PC-3 (cell line): ENCODE measurements at regions of chr13 and their contacts with region 1.

Region 1: GRCh38 chr13:97018029-97018831 is 24.0 kb upstream of the OXGR1 start:
- DNase-seq: peak; percentile 72
- ATAC-seq: peak; percentile 69
- H3K4me3 ChIP-seq: no peak overlapping the region
- H3K27ac ChIP-seq: no peak overlapping the region
- H3K4me1 ChIP-seq: no peaks in the 10 kb centered on the region
- H3K27me3 ChIP-seq: peaks cover 42% of the 10 kb centered on the region
- CTCF ChIP-seq: peak; percentile 84

Region 2: GRCh38 chr13:96967248-96967745 is 50.9 kb before region 1 on chr13:
- CTCF ChIA-PET with region 1: interaction called, 10 read pairs
- POLR2A ChIA-PET with region 1: no interaction called
- intact Hi-C with region 1: no loop called
- DNase-seq: peak; percentile 26
- ATAC-seq: no peak
- H3K4me3 ChIP-seq: no peak overlapping the region
- H3K27ac ChIP-seq: no peak overlapping the region
- H3K4me1 ChIP-seq: no peaks in the 10 kb centered on the region
- H3K27me3 ChIP-seq: 0 out of 2 replicates have a peak, but pooled peaks cover 4% of the 10 kb centered on the region
- CTCF ChIP-seq: no peak; the same call in 1 of the 2 replicates

Region 3: DNA sequence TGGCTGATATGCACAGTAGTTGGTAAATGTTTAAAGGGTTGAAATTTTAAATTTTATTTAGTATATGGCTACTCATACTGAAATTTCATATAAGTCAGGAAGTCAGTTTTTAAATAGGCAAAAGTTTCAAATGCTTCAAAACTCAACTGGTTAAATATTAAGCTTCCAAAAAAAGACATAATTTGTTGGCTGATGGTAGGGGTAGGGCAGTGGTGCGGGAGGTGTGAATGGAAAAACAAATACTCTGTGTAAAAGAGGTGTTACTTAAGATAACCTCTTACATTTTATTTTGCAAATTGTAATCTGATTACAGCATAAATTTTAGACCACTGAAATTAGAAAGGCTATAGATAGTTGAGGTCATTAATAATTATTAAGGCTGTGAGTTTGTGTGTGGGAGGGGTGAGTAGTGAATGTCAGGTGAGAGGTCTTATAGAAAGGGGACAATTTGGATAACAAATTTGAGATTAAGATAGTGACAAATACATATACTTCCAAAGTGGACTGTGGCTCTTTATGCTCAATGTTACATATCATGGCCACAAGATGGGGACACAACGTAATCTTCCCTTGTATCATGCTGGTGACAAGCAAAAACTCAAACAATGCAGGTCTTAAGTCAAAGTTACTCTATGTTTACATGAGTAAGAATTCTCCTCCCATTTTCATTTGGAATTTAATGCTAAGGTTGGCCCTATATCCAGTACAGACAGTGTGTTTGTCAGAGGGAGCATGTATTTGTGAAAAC is 12.6 kb after region 1 on chr13:
- CTCF ChIA-PET with region 1: no interaction called
- POLR2A ChIA-PET with region 1: no interaction called
- intact Hi-C with region 1: loop called (anchors 1 kb)
- DNase-seq: peak; percentile 60
- ATAC-seq: peak; percentile 68
- H3K4me3 ChIP-seq: no peak overlapping the region
- H3K27ac ChIP-seq: no peak overlapping the region
- H3K4me1 ChIP-seq: no peaks in the 10 kb centered on the region; the same call in 1 of the 2 replicates
- H3K27me3 ChIP-seq: no peaks in the 10 kb centered on the region
- CTCF ChIP-seq: peak; percentile 58

Region 4: GRCh38 chr13:97043302-97043701 is 25.1 kb after region 1 on chr13:
- CTCF ChIA-PET with region 1: no interaction called
- POLR2A ChIA-PET with region 1: no interaction called
- intact Hi-C with region 1: no loop called
- DNase-seq: no peak
- ATAC-seq: no peak
- H3K4me3 ChIP-seq: no peak overlapping the region
- H3K27ac ChIP-seq: no peak overlapping the region
- H3K4me1 ChIP-seq: no peaks in the 10 kb centered on the region
- H3K27me3 ChIP-seq: no peaks in the 10 kb centered on the region
- CTCF ChIP-seq: no peak

Region 5: GRCh38 chr13:97359181-97360057 is 341.2 kb after region 1 on chr13:
- CTCF ChIA-PET with region 1: no interaction called
- POLR2A ChIA-PET with region 1: no interaction called
- intact Hi-C with region 1: loop called (anchors 1 kb)
- DNase-seq: peak; percentile 68
- ATAC-seq: peak; percentile 81
- H3K4me3 ChIP-seq: no peak overlapping the region
- H3K27ac ChIP-seq: no peak overlapping the region
- H3K4me1 ChIP-seq: no peaks in the 10 kb centered on the region
- H3K27me3 ChIP-seq: no peaks in the 10 kb centered on the region
- CTCF ChIP-seq: peak; percentile 88

Region 6: GRCh38 chr13:97574926-97575325 is 556.7 kb after region 1 on chr13:
- CTCF ChIA-PET with region 1: no interaction called
- POLR2A ChIA-PET with region 1: no interaction called
- intact Hi-C with region 1: loop called (anchors 10 kb)
- DNase-seq: peak; percentile 59
- ATAC-seq: peak; percentile 91
- H3K4me3 ChIP-seq: no peak overlapping the region
- H3K27ac ChIP-seq: no peak overlapping the region
- H3K4me1 ChIP-seq: no peaks in the 10 kb centered on the region
- H3K27me3 ChIP-seq: no peaks in the 10 kb centered on the region
- CTCF ChIP-seq: peak; percentile 72

Region 7: DNA sequence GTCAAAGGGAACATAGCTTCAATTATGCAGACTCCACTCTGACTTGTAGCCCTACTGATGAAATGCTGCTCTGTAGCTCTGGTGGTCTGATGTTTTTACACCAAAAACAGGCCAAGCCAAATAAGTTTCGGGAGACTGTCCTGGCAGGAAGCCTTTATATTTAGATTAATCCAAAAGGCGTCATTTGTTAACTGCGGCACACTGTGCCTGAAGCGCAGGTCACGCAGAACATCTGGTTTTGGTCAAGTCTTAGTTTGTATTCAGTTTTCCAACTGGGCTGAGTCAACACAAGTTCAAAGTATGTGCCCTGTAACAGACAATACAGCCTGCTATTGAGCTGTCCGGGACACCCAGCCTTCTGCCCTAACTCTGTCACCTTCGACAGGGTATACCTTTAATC is 780.6 kb after region 1 on chr13:
- CTCF ChIA-PET with region 1: no interaction called
- POLR2A ChIA-PET with region 1: no interaction called
- intact Hi-C with region 1: loop called (anchors 5 kb)
- DNase-seq: no peak
- ATAC-seq: no peak
- H3K4me3 ChIP-seq: no peak overlapping the region
- H3K27ac ChIP-seq: no peak overlapping the region
- H3K4me1 ChIP-seq: no peaks in the 10 kb centered on the region
- H3K27me3 ChIP-seq: no peaks in the 10 kb centered on the region
- CTCF ChIP-seq: no peak